CD8-positive, alpha-beta T cell (primary cell): ENCODE measurements at regions of chr19 and their contacts with region 1.

Region 1: GRCh38 chr19:14091081-14091812 is 696 bp upstream of the SAMD1 start:
- DNase-seq: peak in 8 of 9 experiments; percentile 37 to 84 (median 69)
- ATAC-seq: peak; percentile 42
- H3K4me3 ChIP-seq: peak overlapping the region; percentile 82 to 87
- H3K4me3 Mint-ChIP-seq: peak overlapping the region; percentile 99
- H3K27ac ChIP-seq: peak overlapping the region; percentile 51 to 66
- H3K27ac Mint-ChIP-seq: peak overlapping the region; percentile 98
- H3K4me1 ChIP-seq: peaks cover 13% of the 10 kb centered on the region
- H3K4me1 Mint-ChIP-seq: peaks cover 22% of the 10 kb centered on the region
- H3K27me3 ChIP-seq: no peaks in the 10 kb centered on the region
- H3K27me3 Mint-ChIP-seq: no peaks in the 10 kb centered on the region
- CTCF ChIP-seq: peak; percentile 40

Region 2: DNA sequence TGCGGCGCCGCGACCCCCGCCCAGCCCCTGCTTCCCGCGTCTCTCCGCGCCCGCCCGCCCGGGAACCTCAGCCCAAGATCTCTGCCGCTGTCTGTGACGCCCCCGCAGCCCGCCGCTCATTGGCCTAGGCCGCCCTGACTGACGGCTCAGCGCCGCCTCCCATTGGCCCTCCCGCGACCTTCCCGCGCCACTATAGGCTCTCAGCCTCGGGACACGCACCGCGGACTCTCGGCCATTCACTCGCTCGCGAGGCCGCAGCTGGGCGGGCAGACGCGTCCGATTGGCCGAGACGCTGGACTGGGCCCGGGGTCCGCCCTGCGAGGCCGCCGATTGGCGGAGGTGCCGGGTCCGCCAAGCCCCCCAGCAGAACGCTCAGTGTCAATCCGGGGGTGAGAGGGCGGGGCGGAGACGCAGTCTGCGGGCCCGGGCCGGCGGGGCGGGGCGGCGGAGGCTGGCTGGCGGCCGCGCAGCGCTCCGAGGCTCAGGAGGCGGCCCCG is 26.5 kb after region 1 on chr19 and contains the start of gene PRKACA:
- CTCF ChIA-PET with region 1: interaction called, 8 read pairs
- POLR2A ChIA-PET with region 1: interaction called, 4 read pairs
- intact Hi-C with region 1: loop called (anchors 1 kb)
- DNase-seq: peak; percentile 95 to 99 (median 98)
- ATAC-seq: peak; percentile 90
- H3K4me3 ChIP-seq: peak within 1 kb of the TSS; percentile 67 to 72
- H3K4me3 Mint-ChIP-seq: peak within 1 kb of the TSS; percentile 94
- H3K27ac ChIP-seq: peak within 1 kb of the TSS; percentile 52 to 86
- H3K27ac Mint-ChIP-seq: peak within 1 kb of the TSS; percentile 99
- H3K4me1 ChIP-seq: peaks cover 42% of the 10 kb centered on the region
- H3K4me1 Mint-ChIP-seq: peaks cover 41% of the 10 kb centered on the region
- H3K27me3 ChIP-seq: no peaks in the 10 kb centered on the region
- H3K27me3 Mint-ChIP-seq: no peaks in the 10 kb centered on the region
- CTCF ChIP-seq: no peak
- total RNA-seq, gene PRKACA: 37.0 to 40.8 TPM

Region 3: DNA sequence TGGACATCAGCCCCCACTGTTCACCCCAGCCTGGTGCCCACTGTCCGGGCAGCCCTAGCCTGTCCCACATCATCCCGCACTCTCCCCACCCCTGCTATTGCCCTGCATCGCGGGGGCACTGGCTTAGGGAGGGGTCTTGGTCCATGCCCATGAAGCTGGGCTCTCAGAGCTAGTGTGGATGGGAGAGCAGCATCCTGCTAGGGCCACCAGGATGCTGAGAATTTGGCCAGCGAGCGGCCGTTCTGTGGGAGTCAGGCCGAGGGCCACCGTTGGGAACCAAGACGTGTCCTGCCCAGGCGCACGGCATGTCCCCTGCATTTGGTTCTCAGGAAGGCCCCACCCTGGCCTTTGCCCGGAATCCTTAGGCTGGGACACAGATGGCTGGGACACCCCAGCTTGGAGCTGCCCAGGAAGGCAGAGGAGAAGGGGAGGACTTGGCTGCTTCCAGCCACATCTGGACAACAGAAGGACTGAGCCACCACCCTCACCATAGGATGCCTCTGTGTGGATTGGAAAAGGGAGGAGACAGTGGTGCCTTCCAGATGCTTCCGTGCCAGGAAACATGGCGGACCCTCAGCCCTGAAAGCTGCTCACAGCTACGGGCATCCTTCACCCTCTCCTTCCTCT is 304.6 kb after region 1 on chr19:
- CTCF ChIA-PET with region 1: no interaction called
- POLR2A ChIA-PET with region 1: no interaction called
- intact Hi-C with region 1: no loop called
- DNase-seq: peak in 1 of 9 experiments; percentile 32
- ATAC-seq: no peak
- H3K4me3 ChIP-seq: no peak overlapping the region
- H3K4me3 Mint-ChIP-seq: no peak overlapping the region
- H3K27ac ChIP-seq: no peak overlapping the region
- H3K27ac Mint-ChIP-seq: no peak overlapping the region
- H3K4me1 ChIP-seq: no peaks in the 10 kb centered on the region
- H3K4me1 Mint-ChIP-seq: peaks cover 6% of the 10 kb centered on the region
- H3K27me3 ChIP-seq: no peaks in the 10 kb centered on the region
- H3K27me3 Mint-ChIP-seq: no peaks in the 10 kb centered on the region
- CTCF ChIP-seq: no peak